Posterior cingulate gyrus (tissue), 11 donors: ENCODE measurements at regions of chr1 and their contacts with region 1.

Region 1: DNA sequence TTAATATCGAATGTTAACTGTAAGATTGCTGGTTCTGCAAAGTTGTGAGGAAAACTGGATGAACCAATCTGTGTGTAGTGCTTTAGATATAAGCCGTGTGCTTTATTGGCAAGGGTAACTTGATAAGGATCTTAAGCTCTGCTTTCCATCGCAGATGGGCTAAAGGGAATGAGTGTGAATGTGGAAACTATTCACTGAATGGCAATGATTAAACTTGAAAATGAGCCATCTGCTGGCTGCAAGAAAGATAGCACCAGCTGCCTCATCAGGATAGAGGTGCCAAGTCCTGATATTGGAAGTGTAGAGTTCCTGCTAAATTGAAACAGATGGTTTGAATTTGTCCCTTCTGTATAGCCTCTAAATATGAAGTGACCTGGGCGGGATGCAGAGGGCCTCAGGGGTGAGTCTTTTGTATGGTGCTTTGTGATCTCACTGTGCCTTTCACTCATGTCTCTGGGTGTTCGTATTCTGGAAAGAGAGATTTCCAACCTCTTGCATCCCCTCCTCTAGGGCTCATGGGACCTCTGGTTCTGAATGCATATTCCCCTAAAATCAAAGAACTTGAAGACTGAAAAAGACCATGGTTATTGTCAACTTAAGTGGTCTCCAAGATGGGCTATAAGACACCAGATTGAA is 9.2 kb downstream of the FCRL3 start:
- DNase-seq: no peak

Region 2: GRCh38 chr1:157580179-157580827 is 111.1 kb before region 1 on chr1:
- intact Hi-C with region 1: loop called (anchors 5 kb)
- DNase-seq: no peak